ENCODE measurements at regions of chr13 and their contacts with region 1.

Region 1: DNA sequence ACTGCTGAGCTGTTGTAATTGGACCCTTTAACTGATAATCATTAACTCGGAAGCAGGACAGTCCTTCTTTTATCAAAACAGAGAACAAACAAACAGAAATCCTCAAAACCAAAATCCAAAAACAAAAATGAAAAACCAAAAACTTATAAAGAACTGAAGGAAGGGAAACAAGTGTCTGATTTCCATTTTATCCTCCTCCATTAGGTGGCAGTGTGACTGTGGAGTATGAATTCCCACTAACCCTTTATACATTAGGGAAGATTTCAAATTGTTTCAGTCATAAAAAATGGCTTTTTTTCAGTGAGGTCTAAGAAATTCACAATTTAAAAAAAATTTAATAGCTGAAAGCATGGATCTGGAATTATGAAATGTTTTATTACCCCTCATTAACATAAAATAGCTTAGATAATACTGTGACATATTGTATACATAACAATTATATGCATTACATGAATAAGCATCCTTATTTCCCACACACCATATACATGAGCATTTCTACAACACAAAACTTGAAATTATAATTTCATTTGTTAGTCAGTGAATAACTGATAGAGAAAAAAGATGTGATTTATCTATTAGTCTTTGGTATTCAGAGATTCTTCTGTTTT is 1074.3 kb upstream of the PCDH9 start:
- DNase-seq: no peak
- ATAC-seq: no peak
- H3K4me3 ChIP-seq: no peak overlapping the region
- H3K27ac ChIP-seq: no peak overlapping the region
- H3K4me1 ChIP-seq: no peaks in the 10 kb centered on the region
- H3K27me3 ChIP-seq: no peaks in the 10 kb centered on the region
- CTCF ChIP-seq: peak; percentile 11 to 60 (median 48)

Region 2: GRCh38 chr13:67549331-67549730 is 755.1 kb before region 1 on chr13:
- intact Hi-C with region 1: no loop called
- DNase-seq: no peak
- ATAC-seq: no peak
- H3K4me3 ChIP-seq: no peak overlapping the region
- H3K27ac ChIP-seq: no peak overlapping the region
- H3K4me1 ChIP-seq: no peaks in the 10 kb centered on the region
- H3K27me3 ChIP-seq: no peaks in the 10 kb centered on the region
- CTCF ChIP-seq: no peak

Region 3: DNA sequence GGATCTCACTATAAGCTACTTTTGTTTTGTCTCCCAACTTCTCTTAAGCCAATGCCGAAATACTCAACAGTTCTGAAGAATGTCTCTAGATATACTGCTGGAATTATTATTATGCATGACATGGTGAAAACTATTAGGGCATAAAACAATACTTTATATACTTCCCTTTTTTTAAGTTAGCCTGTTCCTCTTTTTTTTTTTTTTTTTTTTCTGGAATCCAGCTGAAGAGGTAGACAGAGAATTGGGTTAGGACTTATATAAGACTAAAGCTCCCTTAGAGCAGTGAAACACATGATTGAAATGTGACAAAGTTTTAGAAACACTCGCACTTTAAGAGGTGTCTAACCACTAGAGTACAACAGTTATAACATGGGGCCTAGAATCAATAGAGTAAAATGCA is 223.3 kb before region 1 on chr13:
- intact Hi-C with region 1: no loop called
- DNase-seq: no peak
- ATAC-seq: no peak
- H3K4me3 ChIP-seq: no peak overlapping the region
- H3K27ac ChIP-seq: no peak overlapping the region
- H3K4me1 ChIP-seq: no peaks in the 10 kb centered on the region
- H3K27me3 ChIP-seq: no peaks in the 10 kb centered on the region
- CTCF ChIP-seq: no peak

Region 4: GRCh38 chr13:68927387-68928026 is 623.1 kb after region 1 on chr13:
- intact Hi-C with region 1: loop called in 6 of 10 experiments (anchors 5 to 10 kb)
- DNase-seq: no peak
- ATAC-seq: no peak
- H3K4me3 ChIP-seq: no peak overlapping the region
- H3K27ac ChIP-seq: no peak overlapping the region
- H3K4me1 ChIP-seq: no peaks in the 10 kb centered on the region
- H3K27me3 ChIP-seq: no peaks in the 10 kb centered on the region
- CTCF ChIP-seq: peak in 6 of 9 donors; percentile 18 to 38 (median 28)

Region 5: GRCh38 chr13:69324090-69324886 is 1019.9 kb after region 1 on chr13:
- intact Hi-C with region 1: loop called in 1 of 10 experiments (anchors 10 kb)
- DNase-seq: no peak
- ATAC-seq: no peak
- H3K4me3 ChIP-seq: no peak overlapping the region
- H3K27ac ChIP-seq: no peak overlapping the region
- H3K4me1 ChIP-seq: no peaks in the 10 kb centered on the region
- H3K27me3 ChIP-seq: no peaks in the 10 kb centered on the region
- CTCF ChIP-seq: peak in 4 of 9 donors; percentile 11 to 20 (median 19)

Measured in heart right ventricle (tissue), 16 donors.